HepG2 (cell line): ENCODE measurements at regions of chr6 and their contacts with region 1.

Region 1: DNA sequence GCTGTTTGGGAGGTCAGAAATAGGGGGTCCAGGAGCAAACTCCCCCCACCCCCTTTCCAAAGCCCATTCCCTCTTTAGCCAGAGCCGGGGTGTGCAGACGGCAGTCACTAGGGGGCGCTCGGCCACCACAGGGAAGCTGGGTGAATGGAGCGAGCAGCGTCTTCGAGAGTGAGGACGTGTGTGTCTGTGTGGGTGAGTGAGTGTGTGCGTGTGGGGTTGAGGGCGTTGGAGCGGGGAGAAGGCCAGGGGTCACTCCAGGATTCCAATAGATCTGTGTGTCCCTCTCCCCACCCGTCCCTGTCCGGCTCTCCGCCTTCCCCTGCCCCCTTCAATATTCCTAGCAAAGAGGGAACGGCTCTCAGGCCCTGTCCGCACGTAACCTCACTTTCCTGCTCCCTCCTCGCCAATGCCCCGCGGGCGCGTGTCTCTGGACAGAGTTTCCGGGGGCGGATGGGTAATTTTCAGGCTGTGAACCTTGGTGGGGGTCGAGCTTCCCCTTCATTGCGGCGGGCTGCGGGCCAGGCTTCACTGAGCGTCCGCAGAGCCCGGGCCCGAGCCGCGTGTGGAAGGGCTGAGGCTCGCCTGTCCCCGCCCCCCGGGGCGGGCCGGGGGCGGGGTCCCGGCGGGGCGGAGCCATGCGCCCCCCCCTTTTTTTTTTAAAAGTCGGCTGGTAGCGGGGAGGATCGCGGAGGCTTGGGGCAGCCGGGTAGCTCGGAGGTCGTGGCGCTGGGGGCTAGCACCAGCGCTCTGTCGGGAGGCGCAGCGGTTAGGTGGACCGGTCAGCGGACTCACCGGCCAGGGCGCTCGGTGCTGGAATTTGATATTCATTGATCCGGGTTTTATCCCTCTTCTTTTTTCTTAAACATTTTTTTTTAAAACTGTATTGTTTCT is at the start of gene VEGFA:
- DNase-seq: peak; percentile 83
- ATAC-seq: peak; percentile 61
- H3K4me3 ChIP-seq: peak within 1 kb of the TSS; percentile 90 to 98 (median 95)
- H3K27ac ChIP-seq: peak within 1 kb of the TSS; percentile 86
- H3K4me1 ChIP-seq: peaks cover 64% of the 10 kb centered on the region
- H3K27me3 ChIP-seq: no peaks in the 10 kb centered on the region; a peak in 1 of 5 replicates
- CTCF ChIP-seq: peak; percentile 99
- EP300 ChIP-seq: 0 out of 4 replicates have a peak, but pooled peaks of 1 of the 2 experiments have one; percentile 19
- POLR2A ChIP-seq: peak in 1 of 2 experiments; percentile 91; a peak in 2 of 4 replicates
- RAD21 ChIP-seq: peak; percentile 93
- total RNA-seq, gene VEGFA: 34.1 and 68.1 TPM in 2 replicates

Region 2: DNA sequence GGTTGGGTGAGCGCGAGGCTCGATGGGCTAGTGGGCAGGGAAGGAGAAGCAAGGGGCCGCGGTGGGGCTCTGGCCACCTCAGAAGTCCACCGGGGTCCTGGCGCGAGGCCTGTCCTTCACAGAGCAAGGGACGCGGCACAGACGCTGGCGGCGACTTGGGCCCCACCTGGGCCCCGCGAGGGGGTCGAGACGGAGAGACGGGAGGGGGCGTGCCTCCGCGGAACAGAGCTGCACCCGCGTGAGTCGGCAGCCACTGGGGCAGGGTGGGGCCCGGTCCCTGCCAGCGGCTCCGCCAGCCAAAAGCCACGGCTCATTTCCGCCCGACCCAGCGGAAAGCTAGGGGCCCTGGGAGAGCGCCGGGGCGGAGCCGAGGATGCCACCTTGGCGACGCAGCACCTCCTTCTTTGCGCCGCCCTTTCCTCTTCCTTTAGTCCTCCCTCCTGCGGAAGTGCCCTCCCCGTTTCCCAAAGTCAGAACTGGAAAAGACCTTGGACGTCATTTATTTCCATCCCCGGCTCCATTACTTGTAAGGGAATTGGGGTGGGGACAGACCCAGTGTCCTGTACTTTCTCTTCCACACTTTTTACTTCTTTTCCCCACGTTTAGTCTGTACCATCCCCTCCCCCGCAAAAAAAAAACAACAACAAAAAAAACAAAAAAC is 716.1 kb before region 1 on chr6 and contains the start of gene CUL7:
- CTCF ChIA-PET with region 1: no interaction called
- POLR2A ChIA-PET with region 1: no interaction called
- in situ Hi-C with region 1: no loop called
- intact Hi-C with region 1: no loop called
- DNase-seq: peak; percentile 91
- ATAC-seq: peak; percentile 95
- H3K4me3 ChIP-seq: peak within 1 kb of the TSS; percentile 75 to 96 (median 94)
- H3K27ac ChIP-seq: peak within 1 kb of the TSS; percentile 84
- H3K4me1 ChIP-seq: peaks cover 49% of the 10 kb centered on the region
- H3K27me3 ChIP-seq: no peaks in the 10 kb centered on the region; a peak in 1 of 5 replicates
- CTCF ChIP-seq: no peak
- EP300 ChIP-seq: 0 out of 4 replicates have a peak, but pooled peaks of 1 of the 2 experiments have one; percentile 2
- POLR2A ChIP-seq: peak in 1 of 2 experiments; percentile 95; a peak in 2 of 4 replicates
- RAD21 ChIP-seq: peak; percentile 74
- total RNA-seq, gene CUL7: 30.7 and 32.0 TPM in 2 replicates

Region 3: GRCh38 chr6:43129434-43130194 is 640.2 kb before region 1 on chr6:
- CTCF ChIA-PET with region 1: no interaction called
- POLR2A ChIA-PET with region 1: no interaction called
- in situ Hi-C with region 1: no loop called
- intact Hi-C with region 1: no loop called
- DNase-seq: peak; percentile 52
- ATAC-seq: peak; percentile 79
- H3K4me3 ChIP-seq: no peak overlapping the region
- H3K27ac ChIP-seq: no peak overlapping the region
- H3K4me1 ChIP-seq: peaks cover 30% of the 10 kb centered on the region
- H3K27me3 ChIP-seq: no peaks in the 10 kb centered on the region
- CTCF ChIP-seq: peak; percentile 74
- EP300 ChIP-seq: no peak
- POLR2A ChIP-seq: no peak
- RAD21 ChIP-seq: peak; percentile 83

Region 4: DNA sequence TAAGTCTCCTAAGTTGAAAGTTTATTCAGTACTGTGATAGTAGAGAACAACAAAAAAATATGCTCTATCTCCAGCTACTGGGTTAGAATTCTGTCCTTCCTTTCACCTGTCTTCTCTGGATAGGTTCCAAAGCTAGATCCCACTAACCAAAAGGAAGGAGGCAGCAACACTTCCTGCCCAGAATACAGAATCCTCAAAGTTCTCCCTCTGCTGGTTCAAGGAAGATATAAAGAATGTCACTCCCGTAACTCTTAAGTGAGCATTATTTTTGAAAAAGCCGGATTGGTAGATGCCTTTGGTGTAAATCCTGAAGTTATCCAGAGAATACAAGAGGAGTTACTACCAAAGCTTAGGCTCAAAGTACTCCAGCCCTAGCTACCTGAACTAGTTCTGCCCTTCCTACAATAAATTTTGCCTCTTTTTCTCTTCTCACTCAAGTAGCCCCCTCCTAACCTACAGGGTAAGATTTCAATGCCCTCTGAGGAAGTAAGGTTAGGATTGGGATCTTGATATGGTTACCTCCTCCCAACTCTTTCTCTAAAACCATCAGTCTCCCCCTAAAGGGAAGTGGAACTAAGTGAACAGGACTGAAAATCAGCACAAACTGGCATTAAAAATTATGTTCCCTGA is 435.2 kb before region 1 on chr6:
- CTCF ChIA-PET with region 1: no interaction called
- POLR2A ChIA-PET with region 1: no interaction called
- in situ Hi-C with region 1: no loop called
- intact Hi-C with region 1: no loop called
- DNase-seq: peak; percentile 66
- ATAC-seq: peak; percentile 74
- H3K4me3 ChIP-seq: no peak overlapping the region
- H3K27ac ChIP-seq: no peak overlapping the region
- H3K4me1 ChIP-seq: peaks cover 12% of the 10 kb centered on the region
- H3K27me3 ChIP-seq: no peaks in the 10 kb centered on the region
- CTCF ChIP-seq: peak; percentile 60
- EP300 ChIP-seq: no peak
- POLR2A ChIP-seq: no peak
- RAD21 ChIP-seq: peak; percentile 80

Region 5: DNA sequence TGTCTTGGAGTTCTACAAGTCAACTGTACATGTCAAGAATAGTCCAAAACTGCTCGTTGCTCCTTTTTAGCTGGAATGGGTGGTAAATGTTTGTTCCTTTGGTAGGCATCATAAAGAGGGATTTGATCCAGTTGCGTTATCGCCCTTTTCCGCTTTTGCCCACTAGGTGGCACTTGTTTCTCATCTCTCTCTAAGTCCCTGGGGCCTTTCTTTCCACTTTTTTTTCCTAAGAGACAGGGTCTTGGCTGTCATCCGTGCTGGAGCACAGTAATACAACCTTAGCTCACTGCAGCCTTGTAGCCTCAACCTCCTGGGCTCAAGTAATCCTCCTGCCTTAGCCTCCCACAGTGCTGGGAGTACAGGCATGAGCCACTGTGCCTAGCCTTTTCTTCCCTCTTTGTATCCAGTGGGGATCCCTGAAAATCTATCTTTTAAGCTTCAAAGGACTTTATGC is 161.4 kb before region 1 on chr6:
- CTCF ChIA-PET with region 1: no interaction called
- POLR2A ChIA-PET with region 1: no interaction called
- in situ Hi-C with region 1: no loop called
- intact Hi-C with region 1: no loop called
- DNase-seq: peak; percentile 68
- ATAC-seq: peak; percentile 89
- H3K4me3 ChIP-seq: no peak overlapping the region
- H3K27ac ChIP-seq: no peak overlapping the region
- H3K4me1 ChIP-seq: no peaks in the 10 kb centered on the region
- H3K27me3 ChIP-seq: no peaks in the 10 kb centered on the region
- CTCF ChIP-seq: peak; percentile 90
- EP300 ChIP-seq: no peak
- POLR2A ChIP-seq: no peak
- RAD21 ChIP-seq: peak; percentile 54

Region 6: DNA sequence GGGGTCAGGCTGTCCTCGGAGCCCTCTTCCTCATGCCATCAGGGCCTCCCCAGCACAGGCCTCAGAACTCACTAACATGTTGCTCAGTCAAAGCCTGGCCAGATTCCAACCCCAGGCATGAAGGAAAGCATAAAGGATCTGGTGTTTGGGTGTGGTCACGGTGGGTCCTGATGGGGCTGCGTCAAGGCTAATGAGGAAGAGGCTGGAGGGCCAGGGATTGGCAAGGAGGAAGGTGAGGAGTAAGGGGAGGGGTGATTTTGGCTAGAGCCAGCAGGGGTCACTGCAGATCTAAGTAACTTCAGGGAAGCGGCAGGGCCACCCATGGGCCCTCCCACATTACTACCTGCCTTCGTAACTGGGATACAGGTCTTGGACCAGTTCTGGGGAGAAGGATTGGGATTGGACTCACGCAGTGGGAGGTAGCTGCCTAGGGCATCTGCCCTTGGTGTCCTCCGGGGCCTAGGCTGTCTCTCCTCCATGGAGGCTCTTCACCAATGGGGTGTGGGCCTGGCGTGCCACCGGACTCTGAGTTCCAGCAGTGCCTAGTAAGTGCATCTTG is 46.0 kb before region 1 on chr6:
- CTCF ChIA-PET with region 1: interaction called, 20 read pairs
- POLR2A ChIA-PET with region 1: interaction called, 31 read pairs
- in situ Hi-C with region 1: loop called (anchors 5 kb)
- intact Hi-C with region 1: loop called (anchors 1 kb)
- DNase-seq: peak; percentile 84
- ATAC-seq: peak; percentile 91
- H3K4me3 ChIP-seq: no peak overlapping the region; a peak in 1 of 6 replicates
- H3K27ac ChIP-seq: no peak overlapping the region
- H3K4me1 ChIP-seq: peaks cover 50% of the 10 kb centered on the region
- H3K27me3 ChIP-seq: peaks cover 0 to 5% of the 10 kb centered on the region in 2 experiments; a peak in 2 of 5 replicates
- CTCF ChIP-seq: peak; percentile 98
- EP300 ChIP-seq: no peak
- POLR2A ChIP-seq: no peak
- RAD21 ChIP-seq: peak; percentile 95

Region 7: DNA sequence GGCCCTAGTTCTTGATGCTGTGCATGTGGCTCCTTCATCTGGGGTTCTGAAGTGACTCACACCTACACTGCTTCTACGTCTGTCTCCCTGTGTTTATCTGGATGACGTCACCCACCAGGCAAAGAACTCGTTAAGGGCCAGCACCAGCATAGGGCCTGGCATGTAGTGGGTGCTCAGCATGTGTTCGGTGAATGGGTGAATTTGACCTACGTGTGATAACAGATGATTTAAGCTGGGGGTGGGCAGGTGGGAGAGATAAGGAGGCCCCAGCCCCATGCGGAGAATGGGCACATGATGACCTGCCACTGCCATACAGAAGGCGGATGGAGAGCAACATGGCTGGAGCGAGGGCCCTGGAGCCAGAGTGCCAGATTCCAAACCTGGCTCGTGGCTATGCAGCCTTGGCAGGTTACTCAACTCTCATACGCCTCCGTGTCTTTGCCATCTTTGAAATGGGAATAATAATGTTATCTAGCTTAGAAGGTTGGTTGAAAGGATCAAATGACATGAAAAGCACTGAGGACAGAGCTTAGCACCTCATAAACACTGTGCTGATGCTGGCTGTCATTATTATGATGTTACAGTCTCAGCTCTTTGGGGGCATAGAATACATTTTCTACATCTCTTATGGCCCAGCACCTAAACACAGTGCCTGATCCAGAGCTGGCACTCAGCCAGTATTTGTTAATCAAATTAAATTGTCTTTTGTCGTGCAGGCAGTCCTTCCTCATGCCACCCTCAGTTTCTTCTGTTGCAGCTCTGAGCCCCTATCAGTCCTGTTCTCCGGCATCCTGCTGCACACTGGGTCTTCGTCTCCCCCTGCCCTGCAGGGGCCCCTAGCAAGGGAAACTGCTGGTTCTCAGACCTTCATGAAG is 39.9 kb after region 1 on chr6:
- CTCF ChIA-PET with region 1: interaction called, 3 read pairs
- POLR2A ChIA-PET with region 1: interaction called, 66 read pairs
- in situ Hi-C with region 1: loop called (anchors 5 kb)
- intact Hi-C with region 1: no loop called
- DNase-seq: peak; percentile 45
- ATAC-seq: no peak
- H3K4me3 ChIP-seq: no peak overlapping the region
- H3K27ac ChIP-seq: no peak overlapping the region
- H3K4me1 ChIP-seq: peaks cover 83% of the 10 kb centered on the region
- H3K27me3 ChIP-seq: no peaks in the 10 kb centered on the region; a peak in 2 of 5 replicates
- CTCF ChIP-seq: no peak
- EP300 ChIP-seq: no peak
- POLR2A ChIP-seq: no peak
- RAD21 ChIP-seq: no peak

Region 8: DNA sequence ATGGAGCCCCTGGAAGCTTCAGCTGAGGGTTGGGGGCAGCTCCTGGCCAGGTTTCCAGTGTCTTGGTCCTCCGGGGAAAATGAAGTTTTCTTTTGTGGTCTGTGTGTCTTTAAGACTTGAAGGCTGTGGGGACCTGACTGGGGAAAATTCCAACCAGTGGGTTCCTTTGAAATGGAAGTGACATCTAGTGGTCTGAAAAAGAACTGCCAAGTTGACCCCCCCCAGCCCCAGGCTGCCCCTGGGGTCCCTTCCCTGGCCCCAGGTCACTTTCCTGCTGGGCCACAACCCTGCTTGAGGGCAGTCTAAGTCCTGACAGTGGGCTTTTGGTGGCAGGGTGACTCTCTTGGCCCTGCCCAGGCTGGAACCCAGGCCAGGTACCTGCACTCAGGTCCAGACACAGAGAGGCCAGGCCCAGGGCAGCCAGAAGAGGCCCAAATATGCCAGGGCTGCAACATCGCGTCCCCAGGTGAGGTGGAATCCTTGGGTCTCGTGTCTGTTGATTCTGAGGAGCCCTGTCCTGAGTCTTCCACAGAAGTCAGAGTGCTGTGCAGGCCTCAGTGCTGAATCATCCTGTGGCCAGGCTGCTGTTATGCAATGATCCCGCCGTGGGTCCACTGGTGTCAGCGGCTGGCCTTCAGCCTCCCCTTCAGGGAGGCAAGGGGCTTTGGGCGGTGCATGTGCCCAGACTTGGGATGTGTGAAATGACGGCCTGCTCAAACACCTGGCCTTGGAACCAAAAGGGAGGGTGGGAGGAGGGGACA is 68.7 kb after region 1 on chr6:
- CTCF ChIA-PET with region 1: interaction called, 4 read pairs
- POLR2A ChIA-PET with region 1: interaction called, 14 read pairs
- in situ Hi-C with region 1: no loop called
- intact Hi-C with region 1: loop called (anchors 1 kb)
- DNase-seq: peak; percentile 41
- ATAC-seq: peak; percentile 63
- H3K4me3 ChIP-seq: peak overlapping the region in 1 of 3 experiments; percentile 34; a peak in 1 of 6 replicates
- H3K27ac ChIP-seq: no peak overlapping the region
- H3K4me1 ChIP-seq: peaks cover 69% of the 10 kb centered on the region
- H3K27me3 ChIP-seq: peaks cover 9 to 46% of the 10 kb centered on the region in 2 experiments
- CTCF ChIP-seq: peak; percentile 74
- EP300 ChIP-seq: 0 out of 4 replicates have a peak, but pooled peaks of 1 of the 2 experiments have one; percentile 2
- POLR2A ChIP-seq: no peak
- RAD21 ChIP-seq: peak; percentile 75

Region 9: GRCh38 chr6:43916924-43917877 is 147.4 kb after region 1 on chr6:
- CTCF ChIA-PET with region 1: no interaction called
- POLR2A ChIA-PET with region 1: interaction called, 14 read pairs
- in situ Hi-C with region 1: no loop called
- intact Hi-C with region 1: no loop called
- DNase-seq: peak; percentile 92
- ATAC-seq: peak; percentile 78
- H3K4me3 ChIP-seq: peak overlapping the region in 2 of 3 experiments; percentile 5 to 47; a peak in 2 of 6 replicates
- H3K27ac ChIP-seq: peak overlapping the region; percentile 85
- H3K4me1 ChIP-seq: peaks cover 97% of the 10 kb centered on the region
- H3K27me3 ChIP-seq: no peaks in the 10 kb centered on the region
- CTCF ChIP-seq: 0 out of 2 replicates have a peak, but pooled peaks have one; percentile 24
- EP300 ChIP-seq: peak in 1 of 2 experiments; percentile 91; a peak in 2 of 4 replicates
- POLR2A ChIP-seq: no peak; a peak in 1 of 4 replicates
- RAD21 ChIP-seq: 0 out of 2 replicates have a peak, but pooled peaks have one; percentile 10

Region 10: DNA sequence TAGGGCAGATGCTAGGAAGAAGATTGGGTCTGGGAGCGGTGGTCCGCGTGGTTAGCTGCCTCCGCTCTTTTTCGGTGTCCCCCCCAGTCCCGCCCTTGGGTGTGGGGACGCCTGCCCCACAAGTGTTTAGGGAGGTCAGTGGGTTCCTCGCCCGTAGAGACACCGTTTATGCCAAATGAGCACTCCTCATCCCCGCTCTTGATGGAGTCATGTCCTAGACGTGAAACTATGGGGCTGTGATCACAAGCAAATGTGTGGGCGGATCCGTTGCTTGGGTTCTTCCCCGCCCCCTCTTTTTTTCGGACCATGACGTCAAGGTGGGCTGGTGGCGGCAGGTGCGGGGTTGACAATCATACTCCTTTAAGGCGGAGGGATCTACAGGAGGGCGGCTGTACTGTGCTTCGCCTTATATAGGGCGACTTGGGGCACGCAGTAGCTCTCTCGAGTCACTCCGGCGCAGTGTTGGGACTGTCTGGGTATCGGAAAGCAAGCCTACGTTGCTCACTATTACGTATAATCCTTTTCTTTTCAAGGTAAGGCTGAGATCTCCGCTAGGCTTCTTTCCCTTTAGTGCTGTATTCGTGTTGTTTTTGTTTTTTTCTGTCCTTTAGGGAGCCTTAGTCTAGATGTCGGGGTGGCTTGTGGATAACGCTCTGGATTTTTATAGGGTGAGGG is 477.0 kb after region 1 on chr6 and contains the start of gene HSP90AB1:
- CTCF ChIA-PET with region 1: no interaction called
- POLR2A ChIA-PET with region 1: interaction called, 10 read pairs
- in situ Hi-C with region 1: no loop called
- intact Hi-C with region 1: no loop called
- DNase-seq: peak; percentile 98
- ATAC-seq: peak; percentile 65
- H3K4me3 ChIP-seq: peak within 1 kb of the TSS; percentile 81 to 97 (median 87)
- H3K27ac ChIP-seq: peak within 1 kb of the TSS; percentile 96
- H3K4me1 ChIP-seq: peaks cover 72% of the 10 kb centered on the region
- H3K27me3 ChIP-seq: no peaks in the 10 kb centered on the region; a peak in 1 of 5 replicates
- CTCF ChIP-seq: no peak
- EP300 ChIP-seq: peak; percentile 37 to 65; a peak in 3 of 4 replicates
- POLR2A ChIP-seq: peak in 1 of 2 experiments; percentile 100; a peak in 2 of 4 replicates
- RAD21 ChIP-seq: peak; percentile 22; the same call in 1 of the 2 replicates
- total RNA-seq, gene HSP90AB1: 1,472 and 2,212 TPM in 2 replicates